WTC11 (cell line): ENCODE measurements at regions of chr18 and their contacts with region 1.

Region 1: GRCh38 chr18:22977847-22978701 is 44.9 kb downstream of the RBBP8 start:
- DNase-seq: no peak
- ATAC-seq: no peak
- H3K4me3 Mint-ChIP-seq: no peak overlapping the region
- H3K27ac Mint-ChIP-seq: no peak overlapping the region
- H3K4me1 Mint-ChIP-seq: peaks cover 10% of the 10 kb centered on the region
- H3K27me3 Mint-ChIP-seq: no peaks in the 10 kb centered on the region
- CTCF ChIP-seq: no peak

Region 2: GRCh38 chr18:22813648-22814328 is 164.3 kb before region 1 on chr18:
- CTCF ChIA-PET with region 1: interaction called, 37 read pairs
- POLR2A ChIA-PET with region 1: no interaction called
- DNase-seq: no peak
- ATAC-seq: peak; percentile 80
- H3K4me3 Mint-ChIP-seq: no peak overlapping the region
- H3K27ac Mint-ChIP-seq: no peak overlapping the region
- H3K4me1 Mint-ChIP-seq: peaks cover 13% of the 10 kb centered on the region
- H3K27me3 Mint-ChIP-seq: no peaks in the 10 kb centered on the region
- CTCF ChIP-seq: no peak; the same call in 1 of the 2 replicates

Region 3: DNA sequence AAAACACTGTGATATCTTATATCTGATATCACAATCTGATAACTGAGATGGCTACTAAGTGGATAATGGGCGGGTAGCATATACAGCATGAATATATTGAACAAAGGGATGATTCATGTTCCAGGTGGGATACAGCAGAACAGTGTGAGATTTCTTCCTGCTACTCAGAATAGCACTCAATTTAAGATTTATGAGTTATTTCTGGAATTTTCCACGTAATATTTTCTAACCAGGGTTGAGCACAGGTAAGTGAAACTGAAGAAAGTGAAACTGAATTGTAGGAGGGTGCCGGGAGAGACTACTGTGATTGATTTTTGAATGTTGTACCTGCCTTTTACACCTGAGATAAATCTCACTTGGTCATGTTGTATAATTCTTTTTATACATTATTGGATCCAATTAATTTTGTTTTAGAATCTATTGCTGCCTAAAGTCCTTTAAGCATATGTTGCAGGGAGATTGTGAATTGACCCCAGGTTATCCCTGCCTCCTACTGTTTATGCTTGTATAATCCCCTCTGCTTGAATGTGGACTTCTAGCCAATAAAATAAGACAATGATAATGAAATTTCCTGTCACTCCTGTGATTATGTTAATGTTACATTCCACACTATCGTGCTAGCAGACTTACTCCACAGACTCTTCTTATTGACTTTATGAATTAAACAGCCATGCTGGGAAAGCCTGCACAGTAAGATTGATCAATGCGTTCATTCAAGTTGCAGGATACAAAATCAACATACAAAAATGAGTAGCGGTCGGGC is 112.5 kb before region 1 on chr18:
- CTCF ChIA-PET with region 1: no interaction called
- POLR2A ChIA-PET with region 1: no interaction called
- DNase-seq: no peak
- ATAC-seq: no peak
- H3K4me3 Mint-ChIP-seq: no peak overlapping the region
- H3K27ac Mint-ChIP-seq: no peak overlapping the region
- H3K4me1 Mint-ChIP-seq: 0 out of 2 replicates have a peak, but pooled peaks cover 2% of the 10 kb centered on the region
- H3K27me3 Mint-ChIP-seq: no peaks in the 10 kb centered on the region
- CTCF ChIP-seq: no peak

Region 4: DNA sequence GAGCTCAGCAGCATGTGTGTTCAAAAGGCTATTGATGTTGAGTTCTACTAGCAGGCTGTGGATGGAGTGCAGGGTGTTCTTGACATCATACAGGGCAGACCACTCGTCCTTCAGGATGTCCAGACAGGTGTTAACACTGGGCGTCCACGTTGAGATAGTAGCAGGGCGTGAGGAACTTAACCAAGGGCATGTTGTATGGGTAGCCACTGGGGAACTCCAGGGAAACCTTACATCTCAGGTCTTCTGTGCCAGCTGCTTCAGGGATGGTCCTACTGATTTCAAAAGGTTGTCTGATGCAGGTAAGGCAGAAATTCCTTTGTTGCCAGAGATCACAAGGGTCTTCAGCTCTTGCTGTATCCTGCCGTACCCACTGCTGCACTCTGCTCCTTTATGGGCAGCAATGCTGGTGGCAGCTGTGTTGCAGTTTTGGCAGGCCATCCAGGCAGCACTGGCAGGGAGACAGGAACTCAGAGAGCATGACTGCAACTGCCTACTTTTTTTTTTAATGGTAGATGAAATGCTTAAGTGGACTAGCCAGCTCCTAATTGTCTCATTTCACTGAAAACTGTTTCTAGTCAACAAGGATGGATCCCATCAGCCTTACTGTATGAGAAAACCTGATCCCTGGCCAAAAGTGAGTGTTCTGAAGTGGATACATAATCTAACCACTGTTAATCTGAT is 77.4 kb before region 1 on chr18:
- CTCF ChIA-PET with region 1: no interaction called
- POLR2A ChIA-PET with region 1: no interaction called
- DNase-seq: no peak
- ATAC-seq: no peak
- H3K4me3 Mint-ChIP-seq: no peak overlapping the region
- H3K27ac Mint-ChIP-seq: no peak overlapping the region
- H3K4me1 Mint-ChIP-seq: no peaks in the 10 kb centered on the region
- H3K27me3 Mint-ChIP-seq: no peaks in the 10 kb centered on the region
- CTCF ChIP-seq: no peak

Region 5: DNA sequence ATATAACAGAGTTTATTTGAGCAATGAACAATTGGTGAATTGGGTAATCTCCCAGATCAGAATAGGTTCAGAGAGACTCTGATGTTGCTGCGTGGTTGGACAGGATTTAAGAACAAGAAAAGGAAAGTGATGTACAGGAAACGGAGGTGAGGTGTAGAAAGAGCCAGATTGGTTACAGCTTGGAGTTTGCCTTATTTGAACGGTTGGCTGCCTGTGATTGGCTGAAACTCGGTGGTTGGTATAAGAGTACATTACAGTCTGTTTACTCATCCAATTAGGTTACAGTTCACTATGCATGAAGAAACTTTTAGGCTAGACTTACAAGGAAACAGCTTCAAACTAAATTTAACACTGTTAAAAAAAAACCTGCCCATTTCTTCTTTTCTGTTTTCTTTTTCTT is 89.2 kb after region 1 on chr18:
- CTCF ChIA-PET with region 1: no interaction called
- POLR2A ChIA-PET with region 1: no interaction called
- DNase-seq: no peak
- ATAC-seq: no peak
- H3K4me3 Mint-ChIP-seq: no peak overlapping the region
- H3K27ac Mint-ChIP-seq: no peak overlapping the region
- H3K4me1 Mint-ChIP-seq: peaks cover 13% of the 10 kb centered on the region
- H3K27me3 Mint-ChIP-seq: no peaks in the 10 kb centered on the region
- CTCF ChIP-seq: no peak